ENCODE measurements at regions of chr1 and their contacts with region 1.

Region 1: GRCh38 chr1:175373786-175374623 is 181.4 kb upstream of the KIAA0040 start:
- DNase-seq: peak; percentile 47
- H3K4me3 Mint-ChIP-seq: no peak overlapping the region
- H3K27ac Mint-ChIP-seq: no peak overlapping the region
- H3K4me1 Mint-ChIP-seq: no peaks in the 10 kb centered on the region
- H3K27me3 Mint-ChIP-seq: peaks cover 48% of the 10 kb centered on the region
- CTCF ChIP-seq: peak; percentile 92

Region 2: DNA sequence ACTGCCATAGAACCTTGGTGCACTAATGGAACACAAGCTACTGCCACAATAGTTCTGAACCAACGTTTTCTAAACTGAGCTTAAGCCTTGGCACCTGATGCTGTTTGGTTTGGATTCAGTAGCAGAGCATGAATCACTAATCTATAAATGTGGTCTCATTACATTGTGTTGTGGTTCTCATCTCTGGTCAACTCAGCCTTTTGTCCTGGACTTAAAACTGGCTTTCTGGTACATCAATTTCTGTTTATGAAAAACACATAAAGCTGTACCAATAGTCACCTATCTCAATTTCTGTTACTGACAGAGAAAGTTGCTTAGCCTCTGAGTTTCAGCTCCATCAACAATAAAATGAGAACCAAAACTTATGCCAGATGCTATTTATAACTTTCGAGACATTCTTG is 16.1 kb after region 1 on chr1:
- CTCF ChIA-PET with region 1: interaction called, 26 read pairs
- POLR2A ChIA-PET with region 1: interaction called, 3 read pairs
- intact Hi-C with region 1: no loop called
- DNase-seq: no peak
- H3K4me3 Mint-ChIP-seq: no peak overlapping the region
- H3K27ac Mint-ChIP-seq: no peak overlapping the region
- H3K4me1 Mint-ChIP-seq: no peaks in the 10 kb centered on the region
- H3K27me3 Mint-ChIP-seq: peaks cover 62% of the 10 kb centered on the region
- CTCF ChIP-seq: no peak

Region 3: DNA sequence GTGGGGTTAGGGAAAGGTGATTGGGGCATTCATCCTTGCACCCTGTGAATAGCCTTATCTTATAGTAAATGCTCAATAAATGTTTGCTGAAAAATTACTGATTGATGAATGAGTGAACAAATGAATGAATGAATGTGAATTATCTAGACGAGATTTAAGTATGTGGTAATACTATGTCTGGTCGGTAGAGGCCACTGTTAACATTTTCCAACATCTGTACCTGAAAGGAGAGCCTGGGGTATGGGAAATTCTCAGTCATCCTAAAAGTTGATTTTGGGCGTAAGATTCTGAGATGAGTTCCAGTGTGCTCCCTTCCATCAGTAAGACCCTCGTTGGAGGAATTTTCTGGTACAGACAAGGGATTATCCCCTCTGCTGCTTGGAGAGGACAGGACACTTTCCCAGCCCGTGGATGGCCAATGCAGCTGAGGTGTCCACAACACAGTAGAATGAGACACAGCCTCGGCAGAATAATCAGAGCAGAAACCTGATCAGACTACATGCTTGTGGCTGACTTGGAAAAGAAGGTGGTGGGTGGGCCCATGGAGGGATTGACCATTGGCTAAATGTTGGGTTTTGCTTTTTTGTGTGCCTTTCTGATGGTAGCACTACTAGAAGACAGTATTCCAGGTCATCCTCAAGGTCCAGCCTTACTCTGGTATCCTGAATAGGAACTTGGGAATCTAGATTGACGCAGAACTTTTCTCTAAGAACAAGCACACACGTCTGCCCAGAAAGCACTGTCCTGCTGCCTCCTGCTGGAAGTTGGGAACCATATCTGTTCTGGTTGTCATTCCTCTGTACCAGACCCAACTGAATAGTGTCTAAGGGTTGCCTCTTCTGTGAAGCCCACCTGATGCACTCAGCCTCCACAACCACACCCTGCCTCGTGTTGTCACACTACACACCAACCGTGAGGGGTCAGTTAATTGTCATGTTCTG is 107.4 kb after region 1 on chr1:
- CTCF ChIA-PET with region 1: interaction called, 6 read pairs
- POLR2A ChIA-PET with region 1: no interaction called
- intact Hi-C with region 1: loop called (anchors 2 kb)
- DNase-seq: peak; percentile 54
- H3K4me3 Mint-ChIP-seq: no peak overlapping the region
- H3K27ac Mint-ChIP-seq: no peak overlapping the region
- H3K4me1 Mint-ChIP-seq: no peaks in the 10 kb centered on the region
- H3K27me3 Mint-ChIP-seq: peaks cover 87% of the 10 kb centered on the region
- CTCF ChIP-seq: peak; percentile 73

Region 4: DNA sequence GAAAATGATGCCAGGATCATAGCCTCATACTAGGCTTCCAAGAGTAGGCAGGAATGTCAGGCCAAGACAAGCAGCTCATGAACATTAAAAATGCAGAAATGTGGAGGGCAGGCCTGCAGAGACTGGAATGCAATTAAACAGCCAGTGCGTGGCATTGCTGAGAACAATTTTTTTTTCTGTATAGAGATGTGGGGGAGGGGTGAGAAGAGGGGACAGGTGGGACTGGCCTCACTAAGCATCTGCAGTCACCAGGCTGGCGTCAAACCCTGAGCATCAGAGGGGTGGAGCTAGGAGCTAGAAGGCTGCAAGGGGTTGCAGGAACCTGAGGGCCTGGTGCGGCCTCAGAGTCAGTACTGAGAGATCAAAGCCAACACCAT is 255.3 kb after region 1 on chr1:
- CTCF ChIA-PET with region 1: no interaction called
- POLR2A ChIA-PET with region 1: no interaction called
- intact Hi-C with region 1: no loop called
- DNase-seq: no peak
- H3K4me3 Mint-ChIP-seq: no peak overlapping the region
- H3K27ac Mint-ChIP-seq: no peak overlapping the region
- H3K4me1 Mint-ChIP-seq: no peaks in the 10 kb centered on the region
- H3K27me3 Mint-ChIP-seq: peaks cover 24% of the 10 kb centered on the region
- CTCF ChIP-seq: no peak

Region 5: DNA sequence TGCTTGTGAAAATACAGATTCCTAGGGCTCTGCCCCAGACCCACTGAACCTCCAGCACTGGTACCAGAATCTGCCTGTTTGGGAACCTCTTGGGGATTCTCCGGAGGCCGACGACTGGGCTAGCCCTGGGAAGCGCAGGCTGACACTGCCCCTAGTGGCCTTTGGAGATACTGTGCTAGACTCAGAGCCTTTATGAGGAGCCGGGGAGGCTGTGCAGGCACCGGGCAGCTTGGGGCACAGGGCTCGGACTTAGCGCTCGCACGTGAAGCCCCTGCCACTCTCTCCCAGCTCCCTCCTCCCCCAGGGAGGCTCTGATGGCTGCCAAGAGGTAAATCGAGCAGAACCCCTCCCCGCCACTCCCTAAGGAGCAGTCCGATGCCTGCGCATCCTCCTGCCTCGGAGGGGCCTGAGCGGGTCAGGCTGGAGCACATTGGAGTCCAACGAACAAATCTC is 514.0 kb after region 1 on chr1:
- CTCF ChIA-PET with region 1: interaction called, 10 read pairs
- POLR2A ChIA-PET with region 1: no interaction called
- intact Hi-C with region 1: loop called (anchors 2 kb)
- DNase-seq: peak; percentile 61
- H3K4me3 Mint-ChIP-seq: no peak overlapping the region
- H3K27ac Mint-ChIP-seq: no peak overlapping the region
- H3K4me1 Mint-ChIP-seq: no peaks in the 10 kb centered on the region
- H3K27me3 Mint-ChIP-seq: no peaks in the 10 kb centered on the region
- CTCF ChIP-seq: peak; percentile 84

Region 6: DNA sequence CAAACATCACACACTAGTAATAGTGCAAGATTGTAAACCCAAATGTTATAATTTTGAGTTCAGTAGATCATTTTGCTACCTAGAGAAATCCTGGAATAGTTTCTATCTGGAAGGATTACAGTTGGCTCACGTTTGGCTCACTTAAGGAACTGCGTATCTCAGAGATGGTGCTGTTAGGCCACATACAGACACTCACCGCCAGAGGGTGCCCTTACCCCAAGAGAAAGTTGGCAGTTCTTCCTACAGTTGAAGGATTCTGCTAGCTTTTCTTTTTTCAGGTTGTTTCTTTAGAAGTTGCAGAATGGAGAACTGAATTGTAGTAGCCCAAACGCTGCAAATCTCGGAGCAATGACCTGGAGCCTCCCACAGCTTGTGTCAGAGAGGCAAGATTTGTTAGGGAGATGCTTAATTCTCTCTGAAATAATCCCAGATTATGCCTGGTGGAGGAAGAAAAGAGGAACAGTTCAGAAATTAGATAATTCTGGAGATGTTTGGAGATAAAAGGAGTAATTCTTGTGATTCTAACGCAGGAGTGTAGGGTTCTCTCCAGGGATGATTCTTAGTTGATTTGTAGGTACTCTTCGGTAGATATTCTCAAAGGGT is 1001.1 kb after region 1 on chr1:
- CTCF ChIA-PET with region 1: interaction called, 3 read pairs
- POLR2A ChIA-PET with region 1: no interaction called
- intact Hi-C with region 1: loop called (anchors 5 kb)
- DNase-seq: peak; percentile 90
- H3K4me3 Mint-ChIP-seq: no peak overlapping the region
- H3K27ac Mint-ChIP-seq: no peak overlapping the region
- H3K4me1 Mint-ChIP-seq: no peaks in the 10 kb centered on the region
- H3K27me3 Mint-ChIP-seq: no peaks in the 10 kb centered on the region
- CTCF ChIP-seq: peak; percentile 93

Region 7: DNA sequence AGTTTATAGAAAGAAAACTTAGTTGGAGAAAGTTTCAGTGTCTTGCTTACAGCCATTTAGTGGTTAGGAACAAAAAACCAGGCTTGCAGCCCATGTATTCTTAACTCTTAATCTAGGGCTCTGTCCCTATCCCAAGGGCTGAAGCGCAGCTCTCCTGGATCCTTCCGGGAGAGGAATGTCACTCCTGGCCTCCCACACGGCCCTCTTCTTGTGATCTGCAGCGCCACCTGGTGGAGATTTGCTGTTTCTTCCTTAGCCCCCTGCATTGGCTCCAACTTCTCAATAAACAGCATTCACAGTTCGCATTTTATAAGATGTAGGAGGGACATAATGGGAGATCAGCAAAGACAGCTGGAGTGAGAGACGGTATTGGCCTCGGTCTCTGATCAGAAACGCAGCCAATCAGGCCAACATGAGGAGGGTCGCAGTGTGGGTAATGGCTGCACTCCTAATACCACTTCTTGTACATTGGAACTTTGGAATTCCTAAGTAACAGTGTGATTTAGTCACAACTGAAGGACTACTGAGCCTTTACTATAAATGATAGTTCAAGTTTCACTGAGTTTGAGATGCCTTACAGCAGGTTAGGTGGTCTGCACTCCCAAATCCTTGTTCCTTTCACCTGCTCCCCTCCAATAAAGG is 1507.1 kb after region 1 on chr1:
- CTCF ChIA-PET with region 1: no interaction called
- POLR2A ChIA-PET with region 1: no interaction called
- intact Hi-C with region 1: loop called (anchors 2 kb)
- DNase-seq: peak; percentile 90
- H3K4me3 Mint-ChIP-seq: no peak overlapping the region
- H3K27ac Mint-ChIP-seq: no peak overlapping the region
- H3K4me1 Mint-ChIP-seq: no peaks in the 10 kb centered on the region
- H3K27me3 Mint-ChIP-seq: peaks cover 12% of the 10 kb centered on the region
- CTCF ChIP-seq: peak; percentile 95